ENCODE measurements at regions of chrX and their contacts with region 1.

Region 1: GRCh38 chrX:136767104-136767941 is 13.4 kb downstream of the ARHGEF6 start:
- DNase-seq: peak; percentile 55
- H3K4me3 Mint-ChIP-seq: peak overlapping the region; percentile 76
- H3K27ac Mint-ChIP-seq: peak overlapping the region; percentile 87
- H3K4me1 Mint-ChIP-seq: peaks cover 54% of the 10 kb centered on the region
- H3K27me3 Mint-ChIP-seq: no peaks in the 10 kb centered on the region

Region 2: DNA sequence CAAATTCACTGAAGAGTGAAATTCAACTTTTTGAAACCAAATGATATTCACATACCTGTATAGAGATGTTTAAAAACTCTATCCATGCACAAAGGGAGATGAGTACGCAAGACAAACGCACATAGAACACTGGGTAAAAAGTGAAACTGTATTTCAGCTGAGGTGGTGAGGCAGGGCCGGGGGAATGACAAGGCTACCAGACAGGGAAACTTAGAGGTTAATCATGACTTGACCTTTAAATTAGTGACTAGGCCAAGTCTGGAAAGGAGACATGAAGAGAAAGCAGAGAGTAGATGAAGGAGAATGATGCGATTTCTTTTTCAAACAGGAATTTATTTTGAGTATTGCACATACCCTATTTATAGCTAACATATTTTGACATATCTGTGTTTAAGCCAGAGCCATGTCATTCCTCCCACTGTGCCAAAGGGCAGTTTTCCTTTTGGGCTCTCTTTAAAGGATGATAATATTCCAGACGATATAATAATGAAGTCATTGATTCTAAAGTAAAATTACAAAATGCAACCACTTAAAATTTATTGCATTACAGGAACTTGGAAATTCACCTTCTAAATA is 36.0 kb before region 1 on chrX:
- CTCF ChIA-PET with region 1: no interaction called
- POLR2A ChIA-PET with region 1: interaction called, 4 read pairs
- intact Hi-C with region 1: loop called (anchors 2 kb)
- DNase-seq: peak; percentile 53
- H3K4me3 Mint-ChIP-seq: peak overlapping the region; percentile 6
- H3K27ac Mint-ChIP-seq: peak overlapping the region; percentile 56
- H3K4me1 Mint-ChIP-seq: peaks cover 57% of the 10 kb centered on the region
- H3K27me3 Mint-ChIP-seq: no peaks in the 10 kb centered on the region

Region 3: DNA sequence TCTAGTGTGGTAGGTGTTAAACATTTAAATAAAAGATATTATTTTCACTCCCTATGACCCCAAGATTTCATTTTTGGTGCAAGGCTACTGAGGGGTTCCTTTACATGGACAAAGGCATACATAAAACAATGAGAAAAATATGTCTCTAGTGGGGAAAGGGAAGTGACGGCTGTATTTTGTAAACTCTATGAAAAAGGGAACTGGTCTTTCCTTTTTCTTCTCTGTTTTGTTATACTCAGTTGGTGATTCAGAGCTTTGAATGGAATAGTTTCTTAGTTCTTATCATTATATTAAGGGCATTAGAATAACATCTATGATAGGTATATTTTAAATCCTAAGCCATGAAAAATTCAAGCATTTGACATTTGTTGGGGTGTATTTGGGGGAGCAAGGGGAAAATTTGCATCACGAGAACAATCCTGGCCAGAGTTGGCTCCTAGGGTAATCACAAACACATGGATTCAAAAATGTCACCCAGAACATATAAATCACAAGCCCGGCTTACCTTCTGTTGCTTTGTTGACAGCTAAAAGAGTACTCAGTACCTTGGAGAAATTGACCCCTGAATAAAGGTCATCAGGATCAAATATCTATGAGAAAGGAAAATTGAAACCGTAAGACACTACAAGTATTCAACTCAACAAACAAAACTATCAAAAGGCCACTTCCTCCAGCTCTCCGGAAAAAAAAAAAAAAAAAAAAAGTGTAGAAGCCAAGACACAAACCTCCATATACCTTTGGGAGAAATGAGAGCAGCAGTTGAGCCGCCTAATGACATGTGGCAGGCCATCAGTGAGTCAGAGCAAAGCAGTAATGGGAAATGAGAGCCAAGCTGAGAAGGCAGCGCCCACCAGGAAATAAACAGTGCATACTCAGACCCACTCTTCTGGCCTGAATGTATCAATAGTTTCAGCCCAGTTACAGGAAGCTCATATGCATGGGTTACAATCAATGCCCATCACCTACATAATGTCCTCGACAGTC is 20.0 kb before region 1 on chrX:
- CTCF ChIA-PET with region 1: interaction called, 5 read pairs
- POLR2A ChIA-PET with region 1: interaction called, 17 read pairs
- intact Hi-C with region 1: loop called (anchors 2 kb)
- DNase-seq: peak; percentile 57
- H3K4me3 Mint-ChIP-seq: peak overlapping the region; percentile 48
- H3K27ac Mint-ChIP-seq: peak overlapping the region; percentile 93
- H3K4me1 Mint-ChIP-seq: peaks cover 88% of the 10 kb centered on the region
- H3K27me3 Mint-ChIP-seq: no peaks in the 10 kb centered on the region

Region 4: GRCh38 chrX:136866337-136867095 is 99.2 kb after region 1 on chrX:
- CTCF ChIA-PET with region 1: no interaction called
- POLR2A ChIA-PET with region 1: interaction called, 3 read pairs
- intact Hi-C with region 1: loop called (anchors 5 kb)
- DNase-seq: no peak
- H3K4me3 Mint-ChIP-seq: no peak overlapping the region
- H3K27ac Mint-ChIP-seq: peak overlapping the region; percentile 77
- H3K4me1 Mint-ChIP-seq: peaks cover 65% of the 10 kb centered on the region
- H3K27me3 Mint-ChIP-seq: no peaks in the 10 kb centered on the region

Region 5: GRCh38 chrX:136880452-136881013 is 113.2 kb after region 1 on chrX and contains the start of gene RBMX:
- CTCF ChIA-PET with region 1: no interaction called
- POLR2A ChIA-PET with region 1: interaction called, 13 read pairs
- intact Hi-C with region 1: no loop called
- DNase-seq: peak; percentile 93
- H3K4me3 Mint-ChIP-seq: peak within 1 kb of the TSS; percentile 98
- H3K27ac Mint-ChIP-seq: peak within 1 kb of the TSS; percentile 99
- H3K4me1 Mint-ChIP-seq: peaks cover 13% of the 10 kb centered on the region
- H3K27me3 Mint-ChIP-seq: no peaks in the 10 kb centered on the region
- total RNA-seq, gene RBMX: 269 to 271 TPM

Region 6: DNA sequence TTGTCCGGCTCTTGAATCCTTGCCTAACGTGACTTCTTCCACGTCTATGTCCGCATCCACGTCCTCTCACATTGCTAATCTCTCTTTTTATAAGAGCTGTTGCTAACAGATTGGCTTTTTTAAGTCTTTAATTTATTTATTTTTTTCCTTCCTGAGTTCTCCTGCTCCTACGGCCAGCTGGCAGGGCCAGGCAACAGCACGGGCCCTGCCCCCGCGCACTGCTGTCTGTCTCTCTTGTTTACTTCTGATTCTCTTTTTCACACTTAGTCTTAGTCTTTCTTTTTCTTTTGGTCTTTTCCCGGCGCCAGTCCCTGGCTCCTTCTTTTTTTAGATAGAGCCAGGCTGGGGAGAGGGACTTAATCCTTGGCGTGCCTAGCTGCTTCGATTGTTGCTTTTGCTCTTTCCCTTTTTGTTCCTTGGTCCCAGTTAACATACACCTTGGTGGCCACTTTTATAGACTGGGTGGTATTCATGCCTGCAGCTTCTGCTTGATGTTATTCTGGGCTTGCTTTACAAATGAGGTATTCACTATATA is 166.4 kb after region 1 on chrX:
- CTCF ChIA-PET with region 1: no interaction called
- POLR2A ChIA-PET with region 1: no interaction called
- intact Hi-C with region 1: no loop called
- DNase-seq: no peak
- H3K4me3 Mint-ChIP-seq: no peak overlapping the region
- H3K27ac Mint-ChIP-seq: no peak overlapping the region
- H3K4me1 Mint-ChIP-seq: peaks cover 23% of the 10 kb centered on the region
- H3K27me3 Mint-ChIP-seq: no peaks in the 10 kb centered on the region

Measured in activated CD4-positive, alpha-beta memory T cell treated with anti-CD3 and anti-CD28 coated beads for 36 hours (primary cell).